OCI-LY7 (cell line): ENCODE measurements at regions of chr11 and their contacts with region 1.

Region 1: DNA sequence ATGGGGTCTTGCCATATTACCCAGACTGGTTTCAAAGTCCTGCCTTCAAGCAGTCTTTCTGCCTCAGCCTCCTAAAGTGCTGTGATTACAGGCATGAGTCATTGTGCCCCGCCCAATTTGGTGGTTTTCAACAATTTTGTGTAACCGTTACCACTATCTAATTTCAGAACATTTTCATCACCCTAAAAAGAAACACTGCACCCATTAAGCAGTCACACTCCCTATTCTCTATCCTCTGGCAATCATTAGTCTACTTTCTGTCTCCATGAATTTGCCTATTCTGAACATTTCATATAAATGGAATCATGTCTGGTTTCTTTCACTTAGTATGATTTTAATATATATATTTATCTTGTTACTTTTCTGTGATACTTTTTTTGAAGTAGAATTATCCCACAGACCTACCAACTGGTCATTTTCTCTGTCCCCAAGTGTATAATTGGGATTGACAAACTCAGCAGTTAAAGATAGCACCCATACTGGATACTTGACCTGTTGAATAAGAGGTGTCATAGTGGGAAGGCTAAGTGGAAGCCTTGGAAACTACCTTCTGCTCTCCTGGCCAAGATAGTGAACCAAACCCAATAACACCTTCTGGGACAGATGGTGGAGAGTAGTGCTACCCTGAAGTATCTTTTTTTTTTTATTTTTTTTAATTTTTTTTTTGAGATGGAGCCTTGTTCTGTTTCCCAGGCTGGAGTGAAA is 64.8 kb downstream of the STIM1 start:
- DNase-seq: no peak
- H3K4me3 ChIP-seq: no peak overlapping the region
- H3K27ac ChIP-seq: no peak overlapping the region
- H3K4me1 ChIP-seq: peaks cover 29% of the 10 kb centered on the region
- CTCF ChIP-seq: no peak

Region 2: DNA sequence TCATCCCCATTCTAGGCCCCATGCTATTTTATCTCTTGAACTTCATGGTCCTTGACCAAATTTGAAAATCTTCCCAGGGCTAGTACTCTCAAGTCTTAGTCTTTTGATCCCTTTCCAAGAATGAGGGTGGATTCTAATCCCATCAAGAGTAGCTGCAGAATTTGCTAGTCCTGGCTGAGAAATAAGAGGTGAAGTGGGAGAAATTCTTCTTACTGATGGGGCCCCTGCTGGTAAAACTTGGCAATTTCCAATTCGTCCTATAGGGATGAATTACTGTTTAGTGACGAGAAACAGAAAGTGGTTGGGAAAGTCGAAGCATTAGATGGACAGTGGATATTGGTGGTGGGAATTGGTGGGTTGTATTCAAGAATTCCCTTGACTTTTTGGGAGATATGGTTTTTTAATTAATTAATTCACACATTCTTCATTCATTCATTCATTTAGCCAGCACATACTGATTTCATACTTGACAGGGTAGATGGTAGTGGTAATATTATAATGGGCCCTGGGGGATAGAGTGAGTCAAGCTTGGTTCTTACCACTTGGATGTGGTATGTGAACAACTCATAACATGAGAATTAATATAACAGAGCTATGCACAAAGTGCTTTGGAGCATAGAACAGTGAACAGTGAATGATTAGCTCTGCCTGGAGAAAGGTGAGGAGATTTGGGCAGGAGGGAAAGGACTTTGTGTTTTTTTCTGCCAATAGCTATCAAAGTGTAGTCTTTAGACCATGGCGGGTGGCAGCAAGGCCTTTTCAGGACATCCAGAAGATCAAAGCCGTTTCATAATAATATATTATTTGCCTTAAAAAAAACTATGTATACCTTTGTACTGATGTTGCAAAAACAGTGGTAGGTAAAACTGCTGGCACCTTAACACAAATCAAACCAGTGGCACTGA is 39.0 kb after region 1 on chr11:
- CTCF ChIA-PET with region 1: no interaction called
- POLR2A ChIA-PET with region 1: no interaction called
- intact Hi-C with region 1: no loop called
- DNase-seq: peak; percentile 33
- H3K4me3 ChIP-seq: no peak overlapping the region
- H3K27ac ChIP-seq: no peak overlapping the region
- H3K4me1 ChIP-seq: peaks cover 19% of the 10 kb centered on the region
- CTCF ChIP-seq: peak; percentile 70

Region 3: GRCh38 chr11:3995949-3996554 is 75.8 kb after region 1 on chr11:
- CTCF ChIA-PET with region 1: no interaction called
- POLR2A ChIA-PET with region 1: interaction called, 10 read pairs
- intact Hi-C with region 1: no loop called
- DNase-seq: no peak
- H3K4me3 ChIP-seq: no peak overlapping the region
- H3K27ac ChIP-seq: no peak overlapping the region
- H3K4me1 ChIP-seq: no peaks in the 10 kb centered on the region
- CTCF ChIP-seq: no peak

Region 4: GRCh38 chr11:5107285-5107684 is 1187.0 kb after region 1 on chr11:
- CTCF ChIA-PET with region 1: no interaction called
- POLR2A ChIA-PET with region 1: no interaction called
- intact Hi-C with region 1: no loop called
- DNase-seq: no peak
- H3K4me3 ChIP-seq: no peak overlapping the region
- H3K27ac ChIP-seq: no peak overlapping the region
- H3K4me1 ChIP-seq: no peaks in the 10 kb centered on the region
- CTCF ChIP-seq: no peak